ENCODE measurements at regions of chr6 and their contacts with region 1.

Region 1: GRCh38 chr6:90478789-90479602 is 107.9 kb downstream of the MAP3K7 start:
- DNase-seq: peak; percentile 77 to 89
- H3K4me3 ChIP-seq: no peak overlapping the region
- H3K27ac ChIP-seq: no peak overlapping the region
- H3K4me1 ChIP-seq: peaks cover 2 to 11% (median 5%) of the 10 kb centered on the region in 4 experiments; a peak in 4 of 7 replicates
- H3K27me3 ChIP-seq: no peaks in the 10 kb centered on the region
- CTCF ChIP-seq: peak; percentile 70 to 90 (median 84)
- EP300 ChIP-seq: no peak
- POLR2A ChIP-seq: no peak
- RAD21 ChIP-seq: peak; percentile 98 to 99

Region 2: DNA sequence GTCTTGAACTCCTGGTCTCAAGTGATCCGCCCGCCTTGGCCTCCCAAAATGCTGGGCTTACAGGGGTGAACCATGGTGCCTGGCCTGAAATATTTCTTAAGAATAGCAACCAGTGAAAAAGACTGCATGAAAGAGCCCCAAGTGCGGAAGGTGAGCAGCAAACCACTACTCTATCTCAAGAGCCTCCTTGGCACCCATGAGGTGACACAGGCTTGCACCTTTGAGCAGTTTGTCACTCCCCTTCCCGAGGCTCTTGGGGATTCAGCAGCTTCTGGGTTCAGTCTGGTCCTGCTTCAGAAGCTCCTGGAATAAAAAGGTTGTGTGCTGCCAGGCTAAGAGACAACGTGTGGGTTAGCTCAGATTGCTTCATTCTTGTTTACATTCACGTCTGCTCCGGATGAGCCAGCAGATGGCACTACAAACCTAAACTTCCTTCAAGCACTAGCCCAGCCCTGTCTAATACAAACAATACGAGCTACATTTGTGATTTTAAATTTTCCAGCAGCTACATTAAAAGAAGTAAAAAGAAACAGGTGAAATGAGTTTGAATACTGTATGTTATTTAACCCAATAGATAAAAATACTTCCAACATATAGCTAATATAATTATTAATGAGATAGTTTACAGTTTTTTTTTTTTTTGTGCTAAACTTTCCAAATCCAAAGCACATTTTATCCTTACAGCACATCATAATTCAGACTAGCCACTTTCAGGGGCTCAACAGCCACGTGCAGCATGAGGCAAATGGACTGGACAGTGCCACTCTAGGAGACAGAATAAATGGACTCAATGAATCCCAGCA is 538.6 kb before region 1 on chr6:
- CTCF ChIA-PET with region 1: interaction called, 71 read pairs
- POLR2A ChIA-PET with region 1: no interaction called
- DNase-seq: peak in 1 of 2 experiments; percentile 34
- H3K4me3 ChIP-seq: no peak overlapping the region
- H3K27ac ChIP-seq: no peak overlapping the region
- H3K4me1 ChIP-seq: no peaks in the 10 kb centered on the region; a peak in 2 of 7 replicates
- H3K27me3 ChIP-seq: no peaks in the 10 kb centered on the region
- CTCF ChIP-seq: peak; percentile 26 to 87 (median 81)
- EP300 ChIP-seq: no peak
- POLR2A ChIP-seq: no peak
- RAD21 ChIP-seq: peak; percentile 93 to 95

Region 3: DNA sequence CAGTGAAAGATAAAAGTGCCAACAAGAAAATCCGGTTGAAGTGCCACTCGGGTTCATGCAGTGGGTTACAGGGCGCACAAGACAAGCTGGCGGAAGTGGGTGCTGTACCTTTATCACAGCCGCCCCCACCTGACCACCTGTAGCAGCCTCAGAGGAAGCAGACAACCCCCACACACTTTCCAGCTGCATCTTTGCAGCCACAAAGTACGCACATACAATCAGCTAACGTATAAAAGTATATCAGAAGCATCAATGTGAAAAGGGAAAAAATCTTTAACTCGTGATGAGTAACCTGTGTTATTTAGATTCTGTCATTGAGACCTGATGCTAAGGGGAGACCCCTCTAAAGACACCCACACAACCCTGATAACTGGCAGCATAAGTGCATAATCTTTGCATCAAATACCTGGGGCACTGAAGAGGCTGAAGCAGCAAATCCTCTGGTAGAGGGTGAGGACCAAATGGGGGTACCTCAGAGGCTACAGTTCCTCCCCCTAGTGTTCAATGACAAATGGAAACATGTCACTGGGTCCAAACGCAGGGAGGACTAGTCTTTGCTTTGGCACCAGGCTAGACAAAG is 204.5 kb before region 1 on chr6:
- CTCF ChIA-PET with region 1: interaction called, 27 read pairs
- POLR2A ChIA-PET with region 1: no interaction called
- DNase-seq: no peak
- H3K4me3 ChIP-seq: no peak overlapping the region
- H3K27ac ChIP-seq: no peak overlapping the region
- H3K4me1 ChIP-seq: peaks cover 0 to 3% (median 1%) of the 10 kb centered on the region in 4 experiments; a peak in 2 of 7 replicates
- H3K27me3 ChIP-seq: no peaks in the 10 kb centered on the region
- CTCF ChIP-seq: peak in 2 of 3 experiments; percentile 22 to 50; a peak in 3 of 4 replicates
- EP300 ChIP-seq: no peak
- POLR2A ChIP-seq: no peak
- RAD21 ChIP-seq: peak; percentile 39 to 50

Region 4: GRCh38 chr6:90393232-90393884 is 85.6 kb before region 1 on chr6:
- CTCF ChIA-PET with region 1: interaction called, 90 read pairs
- POLR2A ChIA-PET with region 1: no interaction called
- DNase-seq: peak; percentile 47 to 80
- H3K4me3 ChIP-seq: no peak overlapping the region
- H3K27ac ChIP-seq: no peak overlapping the region
- H3K4me1 ChIP-seq: peaks cover 0 to 5% (median 1%) of the 10 kb centered on the region in 4 experiments; a peak in 2 of 7 replicates
- H3K27me3 ChIP-seq: no peaks in the 10 kb centered on the region
- CTCF ChIP-seq: peak; percentile 66 to 88 (median 81)
- EP300 ChIP-seq: no peak
- POLR2A ChIP-seq: no peak
- RAD21 ChIP-seq: peak; percentile 87 to 89

Region 5: DNA sequence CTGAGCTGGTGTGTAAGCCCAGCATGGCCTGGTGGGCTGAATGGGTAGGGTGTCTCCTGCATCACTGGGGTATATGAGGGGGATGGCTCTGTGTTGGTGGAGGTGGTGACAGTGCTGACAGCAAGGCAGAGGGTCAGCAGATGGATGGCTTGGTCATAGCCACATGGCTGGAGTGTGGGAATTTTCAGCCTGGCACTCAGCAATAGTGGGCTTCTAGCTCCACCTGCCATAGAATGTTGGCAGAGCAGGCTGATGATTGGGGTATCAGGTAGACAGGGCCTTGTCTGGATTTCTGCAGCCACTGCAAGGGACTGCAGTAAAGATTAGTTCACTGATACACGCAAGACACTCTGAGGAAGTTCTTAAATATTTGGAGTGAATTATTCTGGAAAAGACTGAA is 44.9 kb before region 1 on chr6:
- CTCF ChIA-PET with region 1: interaction called, 62 read pairs
- POLR2A ChIA-PET with region 1: no interaction called
- DNase-seq: no peak
- H3K4me3 ChIP-seq: no peak overlapping the region
- H3K27ac ChIP-seq: no peak overlapping the region
- H3K4me1 ChIP-seq: peaks cover 0 to 20% (median 15%) of the 10 kb centered on the region in 4 experiments; a peak in 4 of 7 replicates
- H3K27me3 ChIP-seq: no peaks in the 10 kb centered on the region; a peak in 1 of 7 replicates
- CTCF ChIP-seq: peak; percentile 57 to 81 (median 78)
- EP300 ChIP-seq: no peak
- POLR2A ChIP-seq: no peak
- RAD21 ChIP-seq: peak; percentile 90 to 91

Region 6: GRCh38 chr6:90466154-90466940 is 12.6 kb before region 1 on chr6:
- CTCF ChIA-PET with region 1: interaction called, 179 read pairs
- POLR2A ChIA-PET with region 1: no interaction called
- DNase-seq: no peak
- H3K4me3 ChIP-seq: no peak overlapping the region
- H3K27ac ChIP-seq: no peak overlapping the region
- H3K4me1 ChIP-seq: no peaks in the 10 kb centered on the region; a peak in 2 of 7 replicates
- H3K27me3 ChIP-seq: no peaks in the 10 kb centered on the region
- CTCF ChIP-seq: no peak
- EP300 ChIP-seq: no peak
- POLR2A ChIP-seq: no peak
- RAD21 ChIP-seq: no peak